ENCODE measurements at regions of chr13 and their contacts with region 1.

Region 1: GRCh38 chr13:49110122-49110912 is 109.8 kb upstream of the MLNR start:
- DNase-seq: peak; percentile 90
- ATAC-seq: peak; percentile 72
- H3K4me3 Mint-ChIP-seq: peak overlapping the region; percentile 88
- H3K27ac Mint-ChIP-seq: peak overlapping the region; percentile 94
- H3K4me1 Mint-ChIP-seq: peaks cover 27% of the 10 kb centered on the region
- H3K27me3 Mint-ChIP-seq: no peaks in the 10 kb centered on the region
- CTCF ChIP-seq: no peak

Region 2: GRCh38 chr13:48562296-48563066 is 547.8 kb before region 1 on chr13:
- CTCF ChIA-PET with region 1: no interaction called
- POLR2A ChIA-PET with region 1: no interaction called
- intact Hi-C with region 1: no loop called
- DNase-seq: peak; percentile 88
- ATAC-seq: peak; percentile 94
- H3K4me3 Mint-ChIP-seq: no peak overlapping the region
- H3K27ac Mint-ChIP-seq: no peak overlapping the region
- H3K4me1 Mint-ChIP-seq: peaks cover 28% of the 10 kb centered on the region
- H3K27me3 Mint-ChIP-seq: peaks cover 61% of the 10 kb centered on the region
- CTCF ChIP-seq: no peak

Region 3: GRCh38 chr13:48975856-48976575 is 134.3 kb before region 1 on chr13 and contains the start of gene FNDC3A:
- CTCF ChIA-PET with region 1: interaction called, 3 read pairs
- POLR2A ChIA-PET with region 1: no interaction called
- intact Hi-C with region 1: loop called (anchors 5 kb)
- DNase-seq: peak; percentile 92
- ATAC-seq: peak; percentile 78
- H3K4me3 Mint-ChIP-seq: peak within 1 kb of the TSS; percentile 93
- H3K27ac Mint-ChIP-seq: peak within 1 kb of the TSS; percentile 97
- H3K4me1 Mint-ChIP-seq: peaks cover 34% of the 10 kb centered on the region
- H3K27me3 Mint-ChIP-seq: no peaks in the 10 kb centered on the region
- CTCF ChIP-seq: no peak
- total RNA-seq, gene FNDC3A: 25.7 to 26.6 TPM

Region 4: DNA sequence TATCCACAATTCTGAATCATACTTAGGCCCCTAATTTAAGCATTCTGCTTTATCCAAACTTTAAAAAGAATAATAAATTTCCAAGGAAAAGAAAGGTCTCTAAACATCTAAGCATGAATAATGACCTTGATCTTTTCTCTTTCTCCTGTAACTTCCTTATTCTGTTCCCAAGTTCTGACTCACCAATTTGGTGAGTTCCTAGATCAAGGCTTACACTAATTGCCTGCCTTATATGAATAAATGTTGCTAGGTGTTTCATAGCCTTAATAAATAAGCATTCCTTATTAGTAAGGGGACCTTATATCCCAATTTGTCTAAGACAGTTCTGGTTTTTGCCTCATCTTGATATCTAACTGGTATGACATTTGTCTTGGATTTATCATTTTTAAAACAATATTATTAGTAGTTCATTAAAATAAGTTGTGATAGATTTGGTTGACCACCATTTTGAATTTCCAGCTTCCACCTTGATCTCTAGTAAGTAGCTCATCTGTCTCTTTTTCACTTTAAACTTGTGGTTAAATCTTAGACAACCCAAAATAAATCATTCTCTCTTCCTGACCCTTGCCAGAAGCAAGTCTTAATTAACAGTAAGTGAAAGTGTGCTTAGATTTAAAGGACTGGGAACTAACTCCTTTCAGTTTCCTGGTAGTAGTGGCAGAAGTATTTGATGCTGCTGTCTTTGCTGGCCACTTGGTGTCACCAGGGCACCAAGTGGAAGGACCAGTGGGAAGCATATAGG is 11.4 kb before region 1 on chr13:
- CTCF ChIA-PET with region 1: interaction called, 10 read pairs
- POLR2A ChIA-PET with region 1: no interaction called
- intact Hi-C with region 1: no loop called
- DNase-seq: peak; percentile 7
- ATAC-seq: no peak
- H3K4me3 Mint-ChIP-seq: no peak overlapping the region
- H3K27ac Mint-ChIP-seq: no peak overlapping the region
- H3K4me1 Mint-ChIP-seq: peaks cover 15% of the 10 kb centered on the region
- H3K27me3 Mint-ChIP-seq: no peaks in the 10 kb centered on the region
- CTCF ChIP-seq: peak; percentile 31

Measured in activated CD8-positive, alpha-beta T cell treated with anti-CD3 and anti-CD28 coated beads for 36 hours (primary cell).